PC-9 (cell line): ENCODE measurements at regions of chr1 and their contacts with region 1.

Region 1: DNA sequence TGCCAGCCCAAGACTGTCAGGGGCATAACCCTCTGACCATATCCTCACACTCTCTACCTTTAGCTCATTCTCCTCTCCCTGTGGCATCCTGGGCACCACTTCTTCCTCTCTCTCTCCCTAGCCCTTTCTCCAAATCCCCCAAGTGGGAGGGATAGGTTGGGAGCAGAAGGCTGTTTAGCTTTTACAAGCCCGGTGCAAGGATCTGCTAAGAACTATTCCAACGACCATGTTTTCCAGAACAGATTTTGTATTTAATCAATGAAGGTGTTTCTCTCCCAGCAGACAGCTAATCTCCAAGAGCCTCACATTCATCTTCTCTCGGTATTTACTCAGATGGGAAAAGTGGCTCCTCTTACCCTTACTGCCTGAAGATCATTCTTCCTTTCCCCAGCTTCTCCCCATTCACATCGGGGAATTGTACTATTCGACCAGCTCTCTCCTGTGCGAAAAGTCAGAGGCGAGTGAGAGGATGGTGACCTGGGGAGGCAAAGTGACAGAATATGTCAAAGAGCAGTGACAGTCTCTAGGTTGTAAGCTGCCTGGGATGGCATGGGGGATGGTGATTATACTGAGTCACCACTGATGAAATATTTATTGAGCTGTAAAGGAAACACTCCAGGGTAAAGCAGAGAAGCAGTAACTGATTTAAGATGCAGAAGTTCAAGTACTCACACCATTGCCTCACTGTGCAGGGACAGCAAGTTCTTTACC is 47.0 kb upstream of the RBM15 start:
- DNase-seq: peak in 1 of 2 experiments; percentile 82
- H3K4me3 ChIP-seq: no peak overlapping the region
- H3K27ac ChIP-seq: peak overlapping the region; percentile 34
- H3K4me1 ChIP-seq: peaks cover 36% of the 10 kb centered on the region
- H3K27me3 ChIP-seq: no peaks in the 10 kb centered on the region
- CTCF ChIP-seq: no peak

Region 2: GRCh38 chr1:110196917-110197765 is 95.0 kb before region 1 on chr1:
- CTCF ChIA-PET with region 1: interaction called, 10 read pairs
- POLR2A ChIA-PET with region 1: no interaction called
- intact Hi-C with region 1: no loop called
- DNase-seq: peak; percentile 45 to 68
- H3K4me3 ChIP-seq: no peak overlapping the region
- H3K27ac ChIP-seq: no peak overlapping the region
- H3K4me1 ChIP-seq: peaks cover 12% of the 10 kb centered on the region
- H3K27me3 ChIP-seq: no peaks in the 10 kb centered on the region
- CTCF ChIP-seq: peak; percentile 100

Region 3: DNA sequence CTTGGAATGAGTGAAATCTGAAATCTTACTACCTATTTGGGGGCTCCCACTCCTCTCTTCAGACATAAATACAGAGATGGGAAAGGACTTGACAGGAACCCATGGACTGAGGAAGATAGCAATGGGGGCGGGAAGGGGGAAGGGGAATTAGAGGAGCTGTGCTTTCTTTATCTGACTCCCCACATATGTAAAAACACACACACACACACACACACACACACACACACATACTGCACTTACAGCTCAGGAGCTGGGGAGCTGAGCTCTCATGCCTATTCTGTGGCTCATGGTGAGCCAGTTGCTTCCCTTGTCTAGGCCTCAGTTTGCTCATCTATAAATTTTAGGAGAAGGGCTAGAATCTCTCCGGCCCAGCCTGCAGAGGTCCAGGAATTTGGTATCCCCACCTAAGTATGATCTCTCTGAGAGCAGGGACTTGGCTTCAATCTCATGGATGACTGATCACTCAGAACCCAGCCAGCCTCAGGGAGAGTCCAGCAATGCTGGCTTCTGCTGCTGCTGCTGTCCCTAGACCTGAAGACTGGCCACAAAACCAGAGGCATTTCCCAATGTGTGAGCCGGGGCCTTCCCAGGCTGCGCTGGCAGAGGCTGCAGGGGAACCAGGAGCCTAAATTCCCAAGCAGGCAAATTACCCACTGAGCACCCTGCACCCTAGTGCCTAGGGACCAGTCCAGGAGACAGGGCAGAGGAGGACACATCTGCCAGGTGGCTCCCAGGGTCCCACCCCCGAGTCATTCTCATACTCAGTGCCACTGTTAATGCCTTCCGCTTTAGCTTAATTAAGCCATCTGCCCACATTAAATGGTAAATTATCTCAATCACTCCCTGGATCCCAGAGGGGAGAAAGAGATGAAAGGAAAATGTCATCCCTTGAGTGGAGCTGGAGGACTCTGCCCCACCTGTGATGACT is 10.6 kb before region 1 on chr1:
- CTCF ChIA-PET with region 1: no interaction called
- POLR2A ChIA-PET with region 1: no interaction called
- intact Hi-C with region 1: no loop called
- DNase-seq: no peak
- H3K4me3 ChIP-seq: no peak overlapping the region
- H3K27ac ChIP-seq: no peak overlapping the region
- H3K4me1 ChIP-seq: no peaks in the 10 kb centered on the region
- H3K27me3 ChIP-seq: 0 out of 2 replicates have a peak, but pooled peaks cover 5% of the 10 kb centered on the region
- CTCF ChIP-seq: no peak